ENCODE measurements at regions of chr16 and their contacts with region 1.

Region 1: DNA sequence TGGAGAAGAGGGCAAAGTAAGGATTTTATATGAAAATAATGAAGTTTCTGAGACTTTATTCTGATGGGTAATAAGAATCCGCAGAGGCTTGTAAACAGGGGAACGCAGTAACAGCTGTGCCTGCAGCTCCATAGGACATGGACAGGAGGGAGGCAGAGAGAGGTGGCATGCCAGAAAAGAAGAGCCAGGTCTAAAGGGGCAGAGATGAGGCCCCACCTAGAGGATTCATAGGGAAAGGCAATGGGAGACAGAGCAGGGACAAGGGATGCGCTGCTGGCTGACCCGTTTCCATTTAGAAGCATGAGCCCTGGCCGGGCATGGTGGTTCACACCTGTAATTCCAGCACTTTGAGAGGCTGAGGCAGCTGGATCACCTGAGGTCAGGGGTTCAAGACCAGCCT is 340.3 kb upstream of the CDH5 start:
- DNase-seq: no peak
- ATAC-seq: no peak
- H3K4me3 ChIP-seq: no peak overlapping the region
- H3K27ac ChIP-seq: no peak overlapping the region
- H3K4me1 ChIP-seq: peaks cover 9% of the 10 kb centered on the region; the same call in 1 of the 2 replicates
- H3K27me3 ChIP-seq: no peaks in the 10 kb centered on the region
- CTCF ChIP-seq: peak; percentile 39
- POLR2A ChIP-seq: no peak
- RAD21 ChIP-seq: peak; percentile 53

Region 2: GRCh38 chr16:65373097-65373496 is 653.1 kb before region 1 on chr16:
- CTCF ChIA-PET with region 1: no interaction called
- POLR2A ChIA-PET with region 1: no interaction called
- dilution Hi-C with region 1: no loop called
- in situ Hi-C with region 1: no loop called
- intact Hi-C with region 1: loop called (anchors 5 kb)
- DNase-seq: no peak
- ATAC-seq: no peak
- H3K4me3 ChIP-seq: no peak overlapping the region
- H3K27ac ChIP-seq: no peak overlapping the region
- H3K4me1 ChIP-seq: no peaks in the 10 kb centered on the region; the same call in 1 of the 2 replicates
- H3K27me3 ChIP-seq: no peaks in the 10 kb centered on the region
- CTCF ChIP-seq: no peak
- POLR2A ChIP-seq: no peak
- RAD21 ChIP-seq: no peak

Region 3: GRCh38 chr16:66058172-66058691 is 32.0 kb after region 1 on chr16:
- CTCF ChIA-PET with region 1: no interaction called
- POLR2A ChIA-PET with region 1: no interaction called
- dilution Hi-C with region 1: no loop called
- in situ Hi-C with region 1: no loop called
- intact Hi-C with region 1: no loop called
- DNase-seq: peak; percentile 78
- ATAC-seq: peak; percentile 83
- H3K4me3 ChIP-seq: no peak overlapping the region
- H3K27ac ChIP-seq: peak overlapping the region; percentile 95; the same call in 1 of the 2 replicates
- H3K4me1 ChIP-seq: peaks cover 16% of the 10 kb centered on the region
- H3K27me3 ChIP-seq: peaks cover 7% of the 10 kb centered on the region
- CTCF ChIP-seq: no peak
- POLR2A ChIP-seq: no peak
- RAD21 ChIP-seq: no peak